ENCODE measurements at regions of chr7 and their contacts with region 1.

Region 1: GRCh38 chr7:113636727-113637421 is 281.9 kb downstream of the PPP1R3A start:
- DNase-seq: no peak
- ATAC-seq: no peak
- H3K4me3 ChIP-seq: no peak overlapping the region
- H3K27ac ChIP-seq: no peak overlapping the region
- H3K4me1 ChIP-seq: peaks cover 1% of the 10 kb centered on the region
- H3K27me3 ChIP-seq: no peaks in the 10 kb centered on the region

Region 2: GRCh38 chr7:113684165-113684564 is 47.3 kb after region 1 on chr7:
- intact Hi-C with region 1: no loop called
- DNase-seq: no peak
- ATAC-seq: no peak
- H3K4me3 ChIP-seq: no peak overlapping the region
- H3K27ac ChIP-seq: no peak overlapping the region
- H3K4me1 ChIP-seq: no peaks in the 10 kb centered on the region
- H3K27me3 ChIP-seq: no peaks in the 10 kb centered on the region

Region 3: GRCh38 chr7:113715981-113716856 is 79.3 kb after region 1 on chr7:
- intact Hi-C with region 1: no loop called
- DNase-seq: no peak
- ATAC-seq: peak; percentile 92 to 94
- H3K4me3 ChIP-seq: no peak overlapping the region
- H3K27ac ChIP-seq: peak overlapping the region; percentile 42
- H3K4me1 ChIP-seq: no peaks in the 10 kb centered on the region
- H3K27me3 ChIP-seq: no peaks in the 10 kb centered on the region

Region 4: GRCh38 chr7:113918946-113919345 is 282.1 kb after region 1 on chr7 and contains the start of gene PPP1R3A:
- intact Hi-C with region 1: loop called in 1 of 4 experiments (anchors 10 kb)
- DNase-seq: peak in 1 of 3 donors; percentile 19
- ATAC-seq: peak; percentile 92 to 94
- H3K4me3 ChIP-seq: peak within 1 kb of the TSS; percentile 63
- H3K27ac ChIP-seq: no peak within 1 kb of the TSS
- H3K4me1 ChIP-seq: no peaks in the 10 kb centered on the region
- H3K27me3 ChIP-seq: no peaks in the 10 kb centered on the region
- total RNA-seq, gene PPP1R3A: 79.5 to 120 (median 97.5) TPM

Region 5: DNA sequence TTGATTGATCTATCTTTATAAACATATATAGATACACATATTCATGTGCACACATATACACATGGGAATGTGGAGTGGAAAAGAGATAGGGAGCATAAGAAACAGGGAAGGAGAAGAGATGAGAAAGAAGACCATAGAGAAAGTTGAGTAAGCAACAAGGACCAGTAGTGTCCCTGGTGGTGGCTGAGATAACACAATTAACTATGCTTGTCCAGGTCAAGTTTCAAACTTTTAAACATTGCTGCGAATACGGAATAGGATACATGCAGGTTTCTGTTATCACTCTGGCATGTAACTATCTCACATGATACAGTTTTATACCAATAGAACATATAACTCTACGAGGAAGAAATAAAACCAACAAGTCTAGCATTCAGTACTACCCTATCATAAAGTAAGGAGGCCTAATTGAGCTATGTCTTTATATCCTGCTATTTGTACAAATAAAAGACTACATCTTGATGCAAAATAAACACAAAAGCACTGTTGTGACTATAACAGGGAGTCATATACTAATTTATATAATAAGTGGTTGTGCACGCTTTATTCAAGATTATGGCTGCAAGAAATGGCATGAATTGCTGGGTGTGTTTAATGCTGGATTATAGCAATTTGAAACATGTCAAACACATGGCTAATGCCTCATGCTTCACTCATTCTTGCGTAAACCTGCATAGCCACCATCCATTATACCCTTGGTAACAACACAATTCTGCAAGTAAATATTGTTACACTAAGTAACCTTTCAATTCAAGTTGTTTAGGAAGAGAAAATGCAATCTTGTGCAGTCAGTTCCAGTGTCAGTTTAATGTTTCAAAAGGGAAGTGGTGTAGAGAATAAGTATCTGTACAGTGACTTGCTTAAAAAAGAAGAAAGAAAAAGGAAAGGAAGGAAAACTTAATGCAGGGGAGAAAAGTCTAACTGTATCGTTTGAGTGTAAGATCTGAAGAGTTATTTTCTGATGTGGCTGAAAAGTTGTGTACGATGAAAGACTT is 785.9 kb after region 1 on chr7:
- intact Hi-C with region 1: no loop called
- DNase-seq: no peak
- ATAC-seq: no peak
- H3K4me3 ChIP-seq: no peak overlapping the region
- H3K27ac ChIP-seq: no peak overlapping the region
- H3K4me1 ChIP-seq: no peaks in the 10 kb centered on the region
- H3K27me3 ChIP-seq: no peaks in the 10 kb centered on the region